Heart right ventricle (tissue), 16 donors: ENCODE measurements at regions of chr15 and their contacts with region 1.

Region 1: GRCh38 chr15:87939848-87940457 is 316.6 kb downstream of the NTRK3 start:
- DNase-seq: no peak
- ATAC-seq: peak; percentile 38 to 90 (median 70)
- H3K4me3 ChIP-seq: no peak overlapping the region
- H3K27ac ChIP-seq: peak overlapping the region in 1 of 10 donors; percentile 10
- H3K4me1 ChIP-seq: peaks cover 0 to 19% (median 7%) of the 10 kb centered on the region in 9 donors
- H3K27me3 ChIP-seq: no peaks in the 10 kb centered on the region
- CTCF ChIP-seq: no peak

Region 2: DNA sequence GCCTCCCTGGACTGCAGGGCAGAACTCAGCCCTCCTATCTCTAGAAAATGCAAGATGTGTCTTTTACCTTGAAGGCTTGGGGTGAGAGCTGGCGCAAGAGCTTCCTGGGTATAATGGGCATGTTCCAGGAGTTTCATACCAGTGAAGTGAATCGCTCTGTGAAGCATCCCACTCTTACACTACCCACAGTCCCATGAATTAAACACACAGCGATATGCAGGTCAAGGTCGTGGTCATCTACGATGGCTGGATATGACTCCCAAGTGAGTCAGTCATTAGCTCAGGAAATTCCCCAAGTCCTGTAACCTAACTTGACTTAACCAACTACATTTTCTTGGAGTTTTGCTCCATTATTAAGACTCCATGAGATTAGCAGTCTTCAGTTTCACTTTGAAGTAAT is 123.1 kb before region 1 on chr15:
- intact Hi-C with region 1: loop called in 1 of 10 experiments (anchors 10 kb)
- DNase-seq: no peak
- ATAC-seq: no peak
- H3K4me3 ChIP-seq: no peak overlapping the region
- H3K27ac ChIP-seq: no peak overlapping the region
- H3K4me1 ChIP-seq: no peaks in the 10 kb centered on the region
- H3K27me3 ChIP-seq: no peaks in the 10 kb centered on the region
- CTCF ChIP-seq: no peak

Region 3: GRCh38 chr15:87850916-87851315 is 89.0 kb before region 1 on chr15:
- intact Hi-C with region 1: loop called in 1 of 10 experiments (anchors 10 kb)
- DNase-seq: peak; percentile 16 to 33
- ATAC-seq: peak; percentile 67 to 96 (median 89)
- H3K4me3 ChIP-seq: no peak overlapping the region
- H3K27ac ChIP-seq: peak overlapping the region in 7 of 10 donors; percentile 4 to 79 (median 52)
- H3K4me1 ChIP-seq: peaks cover 0 to 16% (median 0%) of the 10 kb centered on the region in 9 donors
- H3K27me3 ChIP-seq: no peaks in the 10 kb centered on the region
- CTCF ChIP-seq: no peak

Region 4: GRCh38 chr15:87881026-87881425 is 58.9 kb before region 1 on chr15:
- intact Hi-C with region 1: loop called in 1 of 10 experiments (anchors 10 kb)
- DNase-seq: no peak
- ATAC-seq: peak in 3 of 8 donors; percentile 11 to 41 (median 28)
- H3K4me3 ChIP-seq: no peak overlapping the region
- H3K27ac ChIP-seq: no peak overlapping the region
- H3K4me1 ChIP-seq: peaks cover 0 to 12% (median 4%) of the 10 kb centered on the region in 9 donors
- H3K27me3 ChIP-seq: no peaks in the 10 kb centered on the region
- CTCF ChIP-seq: no peak